ENCODE measurements at regions of chr11 and their contacts with region 1.

Region 1: DNA sequence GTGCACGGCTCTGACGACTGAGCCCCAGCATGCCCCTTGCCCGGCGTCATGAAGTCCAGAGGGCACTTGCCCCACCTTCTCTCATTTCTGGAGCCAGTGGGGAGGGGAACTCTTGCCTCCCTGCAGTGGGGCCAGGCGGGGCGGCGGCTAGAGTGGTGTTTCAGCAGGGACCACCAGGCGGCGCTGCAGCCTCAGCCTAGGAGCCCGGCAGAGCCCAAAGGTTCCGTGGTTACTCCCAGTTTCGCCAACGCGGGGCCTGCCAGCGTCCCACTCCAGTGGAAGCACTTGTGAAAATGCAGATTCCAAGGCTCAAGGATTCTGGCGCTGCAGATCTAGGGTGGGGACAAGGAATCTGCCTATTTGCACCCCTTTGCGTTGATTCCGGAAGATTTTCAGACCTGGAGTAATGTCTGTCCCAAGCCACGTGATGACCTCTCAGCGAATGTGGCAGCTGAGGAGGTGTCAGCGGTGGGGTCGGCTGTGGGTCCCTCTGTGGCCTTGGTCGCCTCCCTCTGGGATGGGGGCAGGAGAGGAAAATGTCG is 55.7 kb downstream of the CD82 start:
- DNase-seq: peak; percentile 77
- H3K4me3 ChIP-seq: peak overlapping the region in 1 of 4 donors; percentile 22
- H3K27ac ChIP-seq: no peak overlapping the region
- H3K4me1 ChIP-seq: peaks cover 0 to 8% (median 5%) of the 10 kb centered on the region in 4 donors
- H3K27me3 ChIP-seq: no peaks in the 10 kb centered on the region
- CTCF ChIP-seq: peak; percentile 94 to 98 (median 96)
- EP300 ChIP-seq: no peak
- POLR2A ChIP-seq: no peak

Region 2: DNA sequence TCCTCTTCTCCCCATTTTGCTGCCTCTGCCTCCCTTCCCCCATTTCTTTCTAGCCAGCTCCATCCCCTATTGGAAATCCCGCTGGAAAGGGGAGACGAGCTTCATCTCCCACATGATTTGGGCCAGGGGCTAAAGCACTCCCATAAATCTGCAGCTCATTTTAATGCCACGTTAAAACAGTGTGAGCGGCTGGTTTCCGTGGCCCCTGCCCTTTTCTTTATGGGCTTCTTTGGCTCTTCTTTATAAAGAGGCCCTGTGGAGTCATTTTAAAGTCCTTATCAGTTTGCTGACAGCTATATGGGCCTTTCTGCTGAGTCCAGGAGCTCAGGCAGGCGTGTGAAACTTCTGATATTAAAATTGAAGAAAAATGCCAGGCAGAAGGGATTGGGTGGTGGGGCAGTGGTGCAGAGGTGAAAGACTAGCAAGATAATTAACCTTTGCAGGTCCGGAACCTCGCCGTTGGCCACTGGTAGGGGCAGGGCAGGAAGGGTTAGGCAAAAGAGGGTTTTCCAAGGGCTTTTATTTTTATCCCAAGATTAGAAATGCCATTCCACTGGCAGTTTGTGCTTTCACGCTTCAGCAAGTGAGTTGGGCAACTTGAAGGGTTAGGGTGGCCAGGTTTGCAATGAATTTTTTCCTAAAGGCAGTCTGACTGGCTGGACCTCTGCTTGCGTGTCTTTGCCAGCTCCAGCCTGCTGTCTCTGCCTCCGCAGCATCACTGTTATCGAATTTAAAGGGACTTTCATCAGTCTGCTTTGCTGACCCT is 481.5 kb before region 1 on chr11:
- in situ Hi-C with region 1: no loop called
- intact Hi-C with region 1: no loop called
- DNase-seq: no peak
- H3K4me3 ChIP-seq: no peak overlapping the region
- H3K27ac ChIP-seq: no peak overlapping the region
- H3K4me1 ChIP-seq: no peaks in the 10 kb centered on the region
- H3K27me3 ChIP-seq: no peaks in the 10 kb centered on the region
- CTCF ChIP-seq: no peak
- EP300 ChIP-seq: no peak
- POLR2A ChIP-seq: no peak

Region 3: DNA sequence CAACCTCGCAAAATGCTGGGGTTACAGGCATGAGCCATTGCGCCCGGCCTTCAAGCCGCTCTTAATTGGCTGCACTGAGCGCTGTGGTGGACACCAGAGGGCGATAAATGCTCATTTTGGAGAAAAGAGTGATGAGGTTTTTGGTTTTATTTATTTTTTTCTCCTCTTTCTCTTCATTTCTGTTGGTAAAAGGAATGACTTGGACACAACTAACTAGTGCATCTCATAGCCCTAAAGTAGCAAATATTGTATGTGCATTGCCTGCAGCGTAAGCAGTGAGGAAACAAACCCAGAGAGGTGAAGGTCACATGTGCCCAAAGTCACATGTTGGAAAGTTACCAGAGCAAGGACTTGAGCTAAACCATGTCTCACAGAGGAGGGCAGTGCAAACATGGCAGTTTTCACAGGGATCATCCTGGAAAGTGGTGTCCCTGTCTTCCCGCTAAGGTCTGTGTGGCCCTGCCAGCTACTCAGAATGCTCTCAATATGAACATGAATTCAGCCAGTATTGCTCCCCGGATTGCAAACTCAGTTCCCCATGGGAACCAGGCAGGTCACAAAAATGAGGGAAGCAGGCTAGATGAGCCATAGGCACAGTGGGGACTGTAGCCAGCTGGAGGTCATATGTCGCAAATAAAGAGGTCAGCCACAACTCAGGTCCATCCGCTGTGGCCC is 64.3 kb before region 1 on chr11:
- in situ Hi-C with region 1: loop called in 3 of 4 experiments (anchors 5 to 10 kb)
- intact Hi-C with region 1: loop called (anchors 1 kb)
- DNase-seq: peak; percentile 65
- H3K4me3 ChIP-seq: no peak overlapping the region
- H3K27ac ChIP-seq: no peak overlapping the region
- H3K4me1 ChIP-seq: peaks cover 0 to 10% (median 2%) of the 10 kb centered on the region in 4 donors
- H3K27me3 ChIP-seq: no peaks in the 10 kb centered on the region
- CTCF ChIP-seq: peak; percentile 78 to 88 (median 85)
- EP300 ChIP-seq: no peak
- POLR2A ChIP-seq: no peak

Region 4: GRCh38 chr11:44638032-44638431 is 16.8 kb after region 1 on chr11:
- in situ Hi-C with region 1: no loop called
- intact Hi-C with region 1: no loop called
- DNase-seq: peak; percentile 56
- H3K4me3 ChIP-seq: no peak overlapping the region
- H3K27ac ChIP-seq: no peak overlapping the region
- H3K4me1 ChIP-seq: peaks cover 0 to 10% (median 5%) of the 10 kb centered on the region in 4 donors
- H3K27me3 ChIP-seq: peaks cover 79% of the 10 kb centered on the region
- CTCF ChIP-seq: no peak
- EP300 ChIP-seq: no peak
- POLR2A ChIP-seq: no peak

Region 5: GRCh38 chr11:44893846-44894617 is 272.8 kb after region 1 on chr11:
- in situ Hi-C with region 1: no loop called
- intact Hi-C with region 1: loop called (anchors 5 kb)
- DNase-seq: peak; percentile 58
- H3K4me3 ChIP-seq: no peak overlapping the region
- H3K27ac ChIP-seq: peak overlapping the region; percentile 48 to 81 (median 68)
- H3K4me1 ChIP-seq: peaks cover 0 to 7% (median 3%) of the 10 kb centered on the region in 4 donors
- H3K27me3 ChIP-seq: peaks cover 3% of the 10 kb centered on the region
- CTCF ChIP-seq: peak; percentile 70 to 78 (median 78)
- EP300 ChIP-seq: no peak
- POLR2A ChIP-seq: no peak

Region 6: DNA sequence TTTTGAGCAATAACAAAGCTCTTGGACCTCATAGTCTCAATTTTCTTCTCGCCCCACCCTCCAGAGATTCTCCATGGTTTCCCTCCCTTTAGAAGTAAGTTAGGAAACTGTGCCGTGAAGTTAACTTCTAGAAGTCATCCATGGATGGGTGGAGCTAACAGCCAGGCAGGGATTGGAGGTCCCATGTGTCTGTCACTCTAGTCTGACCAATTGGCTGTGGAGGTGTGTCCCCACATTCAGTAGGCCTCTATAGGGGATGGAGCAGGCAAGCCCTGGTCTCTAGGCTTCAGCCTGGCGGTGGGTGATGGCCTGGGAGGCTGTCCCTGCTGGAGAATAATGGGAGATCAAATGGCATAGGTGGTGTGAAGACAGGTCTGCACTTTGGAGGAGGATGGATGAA is 278.7 kb after region 1 on chr11:
- in situ Hi-C with region 1: loop called in 1 of 4 experiments (anchors 10 kb)
- intact Hi-C with region 1: no loop called
- DNase-seq: peak; percentile 21
- H3K4me3 ChIP-seq: no peak overlapping the region
- H3K27ac ChIP-seq: no peak overlapping the region
- H3K4me1 ChIP-seq: no peaks in the 10 kb centered on the region
- H3K27me3 ChIP-seq: no peaks in the 10 kb centered on the region
- CTCF ChIP-seq: no peak
- EP300 ChIP-seq: no peak
- POLR2A ChIP-seq: no peak

Region 7: DNA sequence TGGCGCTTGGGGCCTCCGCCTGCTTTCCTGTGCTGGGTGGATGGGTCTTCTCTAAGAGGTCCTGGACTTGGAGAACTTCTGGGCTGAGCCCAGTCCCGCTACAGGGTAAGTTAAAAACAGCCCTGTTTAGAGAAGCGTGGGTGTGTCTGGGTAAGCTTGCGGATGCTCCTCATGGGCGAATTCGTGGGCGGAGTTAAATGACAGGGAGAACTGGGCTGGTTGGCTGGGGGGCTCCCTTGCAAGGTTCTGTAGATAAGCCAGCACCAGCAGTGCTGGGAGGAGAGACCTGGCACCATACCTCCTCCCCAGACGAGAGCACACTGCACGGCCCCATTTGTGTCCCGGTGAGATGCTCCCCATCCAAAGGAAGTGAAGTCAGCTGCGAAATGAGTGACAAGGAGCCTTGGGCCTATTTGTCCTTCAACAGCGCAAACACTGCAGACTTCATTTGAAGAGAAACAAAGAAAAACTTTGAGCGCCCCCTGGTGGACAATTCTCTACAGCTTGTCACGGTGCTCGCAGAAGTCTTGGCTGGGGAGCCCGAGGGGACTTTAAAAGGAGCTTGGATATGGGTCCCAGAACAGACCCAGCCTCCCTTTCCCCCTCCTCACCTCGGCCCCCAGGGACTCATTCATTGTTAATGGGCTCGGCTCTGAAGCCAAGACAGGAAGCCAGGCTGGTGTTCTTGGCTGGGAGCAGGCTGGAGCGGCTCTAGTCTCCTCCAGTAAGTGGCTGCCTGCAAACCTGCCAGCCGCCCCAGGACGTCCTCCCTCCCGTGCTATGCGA is 290.0 kb after region 1 on chr11:
- in situ Hi-C with region 1: loop called (anchors 5 to 10 kb)
- intact Hi-C with region 1: loop called (anchors 2 kb)
- DNase-seq: peak; percentile 87
- H3K4me3 ChIP-seq: no peak overlapping the region
- H3K27ac ChIP-seq: no peak overlapping the region
- H3K4me1 ChIP-seq: peaks cover 0 to 19% (median 0%) of the 10 kb centered on the region in 4 donors
- H3K27me3 ChIP-seq: no peaks in the 10 kb centered on the region
- CTCF ChIP-seq: peak; percentile 80 to 93 (median 84)
- EP300 ChIP-seq: no peak
- POLR2A ChIP-seq: no peak